GM12878 (cell line): ENCODE measurements at regions of chr11 and their contacts with region 1.

Region 1: GRCh38 chr11:78645226-78646202 is 70.8 kb upstream of the NARS2 start:
- DNase-seq: peak; percentile 35
- ATAC-seq: peak; percentile 95
- H3K4me3 ChIP-seq: no peak overlapping the region
- H3K27ac ChIP-seq: no peak overlapping the region
- H3K4me1 ChIP-seq: no peaks in the 10 kb centered on the region
- H3K27me3 ChIP-seq: peaks cover 0 to 6% of the 10 kb centered on the region in 2 experiments; a peak in 2 of 4 replicates
- CTCF ChIP-seq: peak; percentile 94 to 98 (median 97)
- EP300 ChIP-seq: no peak
- POLR2A ChIP-seq: no peak
- RAD21 ChIP-seq: peak; percentile 93

Region 2: DNA sequence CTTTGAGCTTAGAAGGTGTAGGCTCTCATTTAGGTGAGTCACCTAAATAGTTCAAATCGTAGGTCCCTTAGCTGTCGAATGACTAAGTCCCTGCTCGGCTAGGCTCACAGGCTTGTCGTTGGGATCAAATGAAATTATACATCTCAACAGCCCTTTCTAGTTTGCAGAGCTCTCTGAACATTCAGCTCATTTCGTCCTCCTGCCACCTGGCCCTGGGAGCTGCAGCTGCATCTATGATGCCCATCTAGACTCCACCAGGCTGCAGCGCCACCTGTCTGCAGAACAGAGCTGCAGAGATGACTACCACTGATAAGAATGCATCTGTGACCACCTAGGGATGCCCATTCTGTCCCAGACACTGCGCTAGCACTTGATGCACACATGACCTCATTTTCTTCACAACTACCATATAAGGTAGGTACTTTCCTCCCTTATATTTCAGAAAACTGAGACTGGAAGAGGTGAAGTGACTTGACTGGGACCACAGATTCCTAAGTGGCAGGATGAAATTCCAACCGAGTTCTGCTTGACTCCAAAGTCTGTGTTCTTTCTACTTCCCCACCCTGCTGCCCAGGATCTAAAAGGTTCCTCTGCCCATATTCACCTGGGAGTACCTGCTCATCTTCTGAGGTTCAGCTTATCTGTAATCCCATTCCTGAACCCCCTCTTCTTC is 70.3 kb after region 1 on chr11:
- CTCF ChIA-PET with region 1: interaction called, 172 read pairs
- POLR2A ChIA-PET with region 1: no interaction called
- RAD21 ChIA-PET with region 1: interaction called, 37 read pairs
- SMC1A ChIA-PET with region 1: interaction called, 55 read pairs
- in situ Hi-C with region 1: no loop called
- intact Hi-C with region 1: loop called (anchors 1 kb)
- DNase-seq: no peak
- ATAC-seq: peak; percentile 90
- H3K4me3 ChIP-seq: no peak overlapping the region
- H3K27ac ChIP-seq: no peak overlapping the region
- H3K4me1 ChIP-seq: no peaks in the 10 kb centered on the region
- H3K27me3 ChIP-seq: peaks cover 0 to 1% of the 10 kb centered on the region in 2 experiments; a peak in 1 of 4 replicates
- CTCF ChIP-seq: peak; percentile 68 to 86 (median 79)
- EP300 ChIP-seq: no peak
- POLR2A ChIP-seq: no peak
- RAD21 ChIP-seq: peak; percentile 51

Region 3: DNA sequence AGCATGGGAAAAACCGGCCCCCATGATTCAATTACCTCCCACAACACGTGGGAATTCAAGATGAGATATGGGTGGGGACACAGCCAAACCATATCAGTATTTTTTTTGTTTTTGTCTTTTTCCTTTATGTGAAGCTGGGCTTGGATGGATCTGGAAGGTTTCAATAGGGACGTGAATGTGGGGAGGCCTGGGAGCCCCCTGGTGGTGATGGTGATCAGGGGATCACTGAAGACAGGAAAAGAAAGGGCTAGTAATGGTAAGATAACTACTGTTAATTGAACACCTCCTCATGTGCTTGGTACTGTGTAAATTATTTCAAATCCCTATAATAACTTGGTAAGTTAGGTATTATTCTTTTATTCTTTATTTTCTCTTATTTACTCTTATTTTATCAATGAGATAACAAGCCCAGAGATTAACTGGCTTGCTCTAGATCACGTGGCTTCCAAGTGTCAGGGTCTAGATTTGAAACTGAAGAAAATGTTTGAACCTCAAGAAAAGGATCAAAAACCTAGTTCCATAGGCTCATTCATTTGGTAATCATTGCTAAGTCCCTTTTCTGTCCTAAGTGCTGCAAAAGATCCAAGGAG is 431.1 kb after region 1 on chr11:
- CTCF ChIA-PET with region 1: interaction called, 6 read pairs
- POLR2A ChIA-PET with region 1: no interaction called
- RAD21 ChIA-PET with region 1: no interaction called
- SMC1A ChIA-PET with region 1: interaction called, 3 read pairs
- in situ Hi-C with region 1: loop called (anchors 10 kb)
- intact Hi-C with region 1: loop called (anchors 5 kb)
- DNase-seq: no peak
- ATAC-seq: peak; percentile 45; the same call in 1 of the 3 replicates
- H3K4me3 ChIP-seq: no peak overlapping the region
- H3K27ac ChIP-seq: no peak overlapping the region
- H3K4me1 ChIP-seq: no peaks in the 10 kb centered on the region
- H3K27me3 ChIP-seq: no peaks in the 10 kb centered on the region; a peak in 1 of 4 replicates
- CTCF ChIP-seq: peak; percentile 38 to 54 (median 43); a peak in 5 of 6 replicates
- EP300 ChIP-seq: no peak
- POLR2A ChIP-seq: no peak
- RAD21 ChIP-seq: peak; percentile 36; the same call in 1 of the 2 replicates

Region 4: DNA sequence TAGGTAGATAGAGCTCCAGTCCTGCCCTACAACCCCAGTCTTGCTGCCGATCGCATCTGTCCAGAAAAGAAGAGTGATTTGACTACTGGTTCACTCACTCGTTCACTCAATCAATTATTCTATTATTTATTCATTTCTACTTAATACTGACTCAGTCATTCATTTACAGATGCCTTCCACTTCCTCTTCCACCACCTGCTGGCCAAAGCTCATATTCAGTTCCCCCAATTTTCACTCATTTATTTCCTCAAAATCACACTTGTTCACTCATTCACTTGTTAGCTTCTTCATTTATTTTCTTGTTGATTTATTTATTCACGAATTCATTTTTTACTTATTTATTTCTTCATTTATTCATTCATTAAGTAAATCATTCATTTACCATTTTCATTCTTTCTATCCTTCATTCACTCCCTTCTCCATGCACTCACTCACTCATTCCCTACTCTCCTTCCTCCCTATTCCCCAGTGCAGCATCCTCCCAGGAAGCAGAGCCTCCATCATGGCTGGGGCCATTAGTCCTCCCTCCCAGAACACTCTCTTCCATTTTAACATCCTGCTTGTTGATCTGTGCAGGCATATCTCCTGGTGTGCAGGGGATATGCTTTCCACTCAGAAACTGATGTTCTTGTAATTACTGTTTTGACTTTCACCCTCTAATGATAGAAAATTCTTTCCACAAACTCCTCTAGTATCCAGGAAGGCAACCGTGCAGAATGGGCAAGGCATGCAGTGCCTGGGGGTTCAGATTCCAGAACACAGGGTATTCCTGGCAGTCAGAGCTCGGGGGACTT is 514.3 kb after region 1 on chr11:
- CTCF ChIA-PET with region 1: interaction called, 9 read pairs
- POLR2A ChIA-PET with region 1: no interaction called
- RAD21 ChIA-PET with region 1: no interaction called
- SMC1A ChIA-PET with region 1: no interaction called
- in situ Hi-C with region 1: no loop called
- intact Hi-C with region 1: loop called (anchors 2 kb)
- DNase-seq: no peak
- ATAC-seq: no peak
- H3K4me3 ChIP-seq: no peak overlapping the region
- H3K27ac ChIP-seq: no peak overlapping the region
- H3K4me1 ChIP-seq: no peaks in the 10 kb centered on the region
- H3K27me3 ChIP-seq: no peaks in the 10 kb centered on the region
- CTCF ChIP-seq: no peak
- EP300 ChIP-seq: no peak
- POLR2A ChIP-seq: no peak
- RAD21 ChIP-seq: no peak